ENCODE measurements at regions of chr9 and their contacts with region 1.

Region 1: GRCh38 chr9:32550562-32551433 is 1.3 kb upstream of the SMIM27 start:
- DNase-seq: peak; percentile 86
- H3K4me3 ChIP-seq: peak overlapping the region; percentile 82
- H3K27ac ChIP-seq: peak overlapping the region; percentile 85
- H3K27me3 ChIP-seq: no peaks in the 10 kb centered on the region
- CTCF ChIP-seq: 0 out of 2 replicates have a peak, but pooled peaks have one; percentile 10

Region 2: GRCh38 chr9:32526041-32526706 is 24.6 kb before region 1 on chr9 and contains the start of gene RIGI:
- CTCF ChIA-PET with region 1: interaction called, 8 read pairs
- POLR2A ChIA-PET with region 1: interaction called, 17 read pairs
- DNase-seq: peak; percentile 82
- H3K4me3 ChIP-seq: peak within 1 kb of the TSS; percentile 84
- H3K27ac ChIP-seq: peak within 1 kb of the TSS; percentile 73
- H3K27me3 ChIP-seq: no peaks in the 10 kb centered on the region
- CTCF ChIP-seq: peak; percentile 32
- polyA plus RNA-seq, gene RIGI: 8.4 and 11.1 TPM in 2 replicates

Region 3: GRCh38 chr9:32571969-32572899 is 21.4 kb after region 1 on chr9:
- CTCF ChIA-PET with region 1: interaction called, 12 read pairs
- POLR2A ChIA-PET with region 1: no interaction called
- DNase-seq: no peak
- H3K4me3 ChIP-seq: peak overlapping the region; percentile 96
- H3K27ac ChIP-seq: peak overlapping the region; percentile 62
- H3K27me3 ChIP-seq: no peaks in the 10 kb centered on the region
- CTCF ChIP-seq: peak; percentile 80

Region 4: DNA sequence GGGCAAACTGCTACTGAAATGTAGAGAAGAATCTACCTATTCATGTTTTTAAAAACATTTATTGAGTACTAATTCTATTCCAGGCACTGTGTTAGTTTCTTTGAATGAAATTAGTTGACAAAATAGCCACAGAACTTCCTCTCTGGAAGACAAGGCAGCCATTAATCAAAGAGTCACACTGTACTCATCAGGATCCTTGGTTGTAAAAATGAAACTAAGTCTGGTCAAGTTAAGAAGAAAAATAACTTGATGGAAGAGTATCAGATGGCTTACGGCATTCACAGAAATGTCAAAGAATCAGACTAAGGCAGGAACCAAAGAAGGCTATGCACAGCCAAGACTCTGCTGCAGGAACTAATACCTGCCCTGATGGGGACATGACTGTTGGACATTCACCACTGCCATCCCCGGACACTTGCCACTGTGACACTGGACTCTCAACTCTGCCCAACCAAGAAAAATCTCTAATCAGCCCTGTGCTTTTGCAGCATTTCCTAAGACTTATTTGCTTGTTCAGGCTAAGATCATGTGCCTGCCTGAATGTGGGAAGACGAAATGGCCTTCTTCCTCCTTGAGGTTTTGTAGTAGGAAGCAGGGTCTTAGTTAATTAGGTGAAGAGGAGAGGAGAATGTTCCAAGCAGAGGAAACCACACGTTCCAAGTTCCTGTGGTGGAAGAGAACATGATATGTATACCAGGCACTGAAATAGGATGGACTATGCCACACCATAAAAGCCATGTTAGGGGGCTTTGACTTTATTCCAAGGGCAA is 45.5 kb after region 1 on chr9:
- CTCF ChIA-PET with region 1: no interaction called
- POLR2A ChIA-PET with region 1: no interaction called
- DNase-seq: no peak
- H3K4me3 ChIP-seq: no peak overlapping the region
- H3K27ac ChIP-seq: no peak overlapping the region
- H3K27me3 ChIP-seq: peaks cover 2% of the 10 kb centered on the region
- CTCF ChIP-seq: no peak

Region 5: GRCh38 chr9:33024966-33025571 is 474.3 kb after region 1 on chr9 and contains the start of gene DNAJA1:
- CTCF ChIA-PET with region 1: no interaction called
- POLR2A ChIA-PET with region 1: interaction called, 12 read pairs
- DNase-seq: peak; percentile 83
- H3K4me3 ChIP-seq: peak within 1 kb of the TSS; percentile 99
- H3K27ac ChIP-seq: peak within 1 kb of the TSS; percentile 94
- H3K27me3 ChIP-seq: no peaks in the 10 kb centered on the region
- CTCF ChIP-seq: no peak
- polyA plus RNA-seq, gene DNAJA1: 180 and 237 TPM in 2 replicates

Measured in AG04450 (cell line).